ENCODE measurements at regions of chr12 and their contacts with region 1.

Region 1: DNA sequence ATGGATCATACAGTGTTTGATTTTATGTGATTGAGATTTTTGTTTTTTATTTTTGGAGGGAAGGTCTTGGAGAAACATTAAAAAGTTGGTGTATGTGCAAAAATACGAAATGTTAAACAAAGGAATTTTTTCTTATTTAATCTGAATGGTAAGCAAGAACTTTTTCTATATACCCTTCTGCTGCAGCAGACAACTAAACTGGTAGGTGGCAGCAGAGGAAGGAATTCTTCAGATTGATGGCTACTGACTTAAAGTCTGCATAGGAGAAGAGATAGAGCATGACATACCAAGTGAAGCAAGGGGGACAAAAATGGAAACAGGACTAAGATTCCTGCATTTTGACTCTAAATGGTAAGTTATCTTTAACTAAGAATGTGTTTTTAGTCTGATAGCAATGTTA is 42.0 kb upstream of the A2ML1 start:
- DNase-seq: peak; percentile 37
- ATAC-seq: peak; percentile 68
- H3K4me3 ChIP-seq: no peak overlapping the region
- H3K27ac ChIP-seq: no peak overlapping the region
- H3K4me1 ChIP-seq: no peaks in the 10 kb centered on the region
- H3K27me3 ChIP-seq: no peaks in the 10 kb centered on the region
- CTCF ChIP-seq: peak; percentile 33; the same call in 1 of the 2 replicates

Region 2: GRCh38 chr12:8890313-8891085 is 110.1 kb after region 1 on chr12:
- CTCF ChIA-PET with region 1: no interaction called
- POLR2A ChIA-PET with region 1: no interaction called
- intact Hi-C with region 1: loop called (anchors 1 kb)
- DNase-seq: peak; percentile 59
- ATAC-seq: peak; percentile 60
- H3K4me3 ChIP-seq: peak overlapping the region; percentile 70
- H3K27ac ChIP-seq: no peak overlapping the region
- H3K4me1 ChIP-seq: no peaks in the 10 kb centered on the region
- H3K27me3 ChIP-seq: 0 out of 2 replicates have a peak, but pooled peaks cover 5% of the 10 kb centered on the region
- CTCF ChIP-seq: peak; percentile 82

Region 3: GRCh38 chr12:9039397-9039977 is 259.1 kb after region 1 on chr12:
- CTCF ChIA-PET with region 1: no interaction called
- POLR2A ChIA-PET with region 1: no interaction called
- intact Hi-C with region 1: loop called (anchors 5 kb)
- DNase-seq: peak; percentile 64
- ATAC-seq: peak; percentile 51; the same call in 1 of the 2 replicates
- H3K4me3 ChIP-seq: no peak overlapping the region
- H3K27ac ChIP-seq: no peak overlapping the region
- H3K4me1 ChIP-seq: no peaks in the 10 kb centered on the region
- H3K27me3 ChIP-seq: no peaks in the 10 kb centered on the region; the same call in 1 of the 2 replicates
- CTCF ChIP-seq: peak; percentile 73